ENCODE measurements at regions of chr3 and their contacts with region 1.

Region 1: GRCh38 chr3:70531063-70531657 is 218.7 kb upstream of the MDFIC2 start:
- DNase-seq: no peak
- H3K4me3 Mint-ChIP-seq: no peak overlapping the region
- H3K27ac Mint-ChIP-seq: no peak overlapping the region
- H3K4me1 Mint-ChIP-seq: no peaks in the 10 kb centered on the region
- H3K27me3 Mint-ChIP-seq: peaks cover 5% of the 10 kb centered on the region

Region 2: GRCh38 chr3:70488131-70488530 is 43.0 kb before region 1 on chr3:
- intact Hi-C with region 1: no loop called
- DNase-seq: no peak
- H3K4me3 Mint-ChIP-seq: no peak overlapping the region
- H3K27ac Mint-ChIP-seq: no peak overlapping the region
- H3K4me1 Mint-ChIP-seq: no peaks in the 10 kb centered on the region
- H3K27me3 Mint-ChIP-seq: peaks cover 5% of the 10 kb centered on the region

Region 3: DNA sequence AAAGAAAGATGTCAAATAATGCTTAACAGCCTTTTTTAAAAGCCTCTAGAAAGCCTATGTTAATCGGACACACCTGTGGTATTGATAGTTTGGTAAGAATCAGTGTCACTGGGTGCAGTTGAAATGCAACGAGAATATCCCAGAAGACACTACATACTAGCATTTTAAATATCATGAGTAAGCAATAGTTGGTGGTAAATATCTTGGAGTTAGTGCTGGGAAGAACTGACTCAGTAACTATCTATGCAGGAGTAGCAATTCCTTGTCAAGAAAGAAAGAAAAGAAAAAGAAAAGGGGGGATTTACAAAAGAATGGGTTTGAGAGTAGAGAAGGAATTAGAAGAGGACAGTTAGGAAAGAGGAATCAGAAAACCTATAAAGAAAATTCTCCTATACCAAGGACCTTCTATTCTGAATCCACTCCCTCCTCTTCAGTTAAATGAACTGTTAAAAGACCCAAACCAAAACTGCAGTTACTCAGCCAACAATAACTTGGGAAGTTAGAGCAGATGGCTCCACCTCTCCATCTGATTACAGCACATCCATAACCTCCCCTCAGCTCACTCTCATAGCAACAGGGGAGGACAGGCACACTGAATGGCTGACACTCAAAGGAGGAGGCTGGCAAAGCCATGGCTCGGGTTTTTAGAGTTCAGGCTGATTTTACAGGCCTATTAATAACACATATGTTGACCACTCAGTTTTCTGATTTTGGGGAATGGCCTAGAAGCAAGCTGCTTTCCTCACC is 11.1 kb before region 1 on chr3:
- intact Hi-C with region 1: no loop called
- DNase-seq: no peak
- H3K4me3 Mint-ChIP-seq: no peak overlapping the region
- H3K27ac Mint-ChIP-seq: no peak overlapping the region
- H3K4me1 Mint-ChIP-seq: no peaks in the 10 kb centered on the region
- H3K27me3 Mint-ChIP-seq: peaks cover 7% of the 10 kb centered on the region

Region 4: GRCh38 chr3:71652781-71653413 is 1121.7 kb after region 1 on chr3:
- intact Hi-C with region 1: loop called (anchors 1 kb)
- DNase-seq: no peak
- H3K4me3 Mint-ChIP-seq: no peak overlapping the region
- H3K27ac Mint-ChIP-seq: peak overlapping the region; percentile 55
- H3K4me1 Mint-ChIP-seq: no peaks in the 10 kb centered on the region
- H3K27me3 Mint-ChIP-seq: no peaks in the 10 kb centered on the region